Sigmoid colon (tissue), 7 donors: ENCODE measurements at regions of chr2 and their contacts with region 1.

Region 1: DNA sequence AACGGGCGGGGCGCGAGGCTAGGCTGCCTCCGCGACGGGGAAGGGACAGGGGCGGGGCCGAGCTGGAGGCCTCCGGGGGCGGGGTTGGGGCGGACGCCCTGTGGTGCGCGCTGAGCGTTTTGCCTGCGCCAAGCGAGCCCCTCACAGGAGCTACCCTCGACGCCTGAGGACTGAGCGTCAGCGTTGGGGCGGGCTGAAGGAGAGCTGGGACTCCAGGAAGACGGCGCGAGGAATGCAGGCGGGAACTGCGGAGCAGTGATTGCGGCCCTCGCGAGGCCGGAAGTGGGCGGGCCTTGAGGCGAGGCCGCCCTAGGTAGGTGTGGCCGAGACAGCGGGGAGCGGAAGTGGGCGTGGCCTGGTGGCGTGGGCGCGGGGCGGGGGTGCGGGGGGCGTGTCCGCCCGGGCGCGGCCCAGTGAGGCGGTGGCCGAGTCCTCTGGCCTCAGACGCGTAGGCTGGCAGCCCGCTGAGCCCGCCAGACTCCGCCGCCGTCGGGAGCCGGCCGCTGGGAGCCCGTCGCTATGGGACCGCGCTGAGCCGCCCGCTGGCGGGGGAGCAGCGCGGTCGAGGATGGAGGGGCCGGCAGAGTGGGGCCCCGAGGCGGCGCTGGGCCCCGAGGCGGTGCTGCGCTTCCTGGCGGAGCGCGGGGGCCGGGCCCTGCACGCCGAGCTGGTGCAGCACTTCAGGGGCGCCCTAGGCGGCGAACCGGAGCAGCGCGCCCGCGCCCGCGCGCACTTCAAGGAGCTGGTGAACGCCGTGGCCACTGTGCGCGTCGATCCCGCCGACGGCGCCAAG is at the starts of genes SEPTIN10 and SOWAHC:
- DNase-seq: peak; percentile 99
- H3K4me3 ChIP-seq: peak within 1 kb of the TSS; percentile 66 to 85 (median 70)
- H3K27ac ChIP-seq: peak within 1 kb of the TSS; percentile 93 to 100 (median 99)
- H3K4me1 ChIP-seq: peaks cover 0 to 63% (median 59%) of the 10 kb centered on the region in 4 donors
- H3K27me3 ChIP-seq: no peaks in the 10 kb centered on the region
- CTCF ChIP-seq: no peak
- EP300 ChIP-seq: peak in 1 of 4 donors; percentile 30
- POLR2A ChIP-seq: peak in 1 of 2 donors; percentile 59
- total RNA-seq, gene SEPTIN10: 122 to 178 (median 161) TPM
- total RNA-seq, gene SOWAHC: 19.4 to 29.3 (median 23.6) TPM

Region 2: GRCh38 chr2:109562421-109562820 is 51.7 kb before region 1 on chr2:
- intact Hi-C with region 1: no loop called
- DNase-seq: no peak
- H3K4me3 ChIP-seq: no peak overlapping the region
- H3K27ac ChIP-seq: no peak overlapping the region
- H3K4me1 ChIP-seq: no peaks in the 10 kb centered on the region
- H3K27me3 ChIP-seq: no peaks in the 10 kb centered on the region
- CTCF ChIP-seq: no peak
- EP300 ChIP-seq: no peak
- POLR2A ChIP-seq: no peak

Region 3: GRCh38 chr2:109690822-109691547 is 76.9 kb after region 1 on chr2:
- intact Hi-C with region 1: loop called (anchors 2 kb)
- DNase-seq: peak; percentile 88
- H3K4me3 ChIP-seq: peak overlapping the region in 1 of 4 donors; percentile 2
- H3K27ac ChIP-seq: peak overlapping the region; percentile 82 to 92 (median 90)
- H3K4me1 ChIP-seq: peaks cover 0 to 95% (median 85%) of the 10 kb centered on the region in 4 donors
- H3K27me3 ChIP-seq: no peaks in the 10 kb centered on the region
- CTCF ChIP-seq: no peak
- EP300 ChIP-seq: peak; percentile 7 to 88 (median 63)
- POLR2A ChIP-seq: peak in 1 of 2 donors; percentile 15

Region 4: GRCh38 chr2:109715313-109715805 is 101.2 kb after region 1 on chr2:
- intact Hi-C with region 1: loop called (anchors 5 kb)
- DNase-seq: peak; percentile 75
- H3K4me3 ChIP-seq: no peak overlapping the region
- H3K27ac ChIP-seq: no peak overlapping the region
- H3K4me1 ChIP-seq: peaks cover 0 to 10% (median 6%) of the 10 kb centered on the region in 4 donors
- H3K27me3 ChIP-seq: no peaks in the 10 kb centered on the region
- CTCF ChIP-seq: peak; percentile 56 to 71 (median 65)
- EP300 ChIP-seq: no peak
- POLR2A ChIP-seq: no peak